ENCODE measurements at regions of chr1 and their contacts with region 1.

Region 1: DNA sequence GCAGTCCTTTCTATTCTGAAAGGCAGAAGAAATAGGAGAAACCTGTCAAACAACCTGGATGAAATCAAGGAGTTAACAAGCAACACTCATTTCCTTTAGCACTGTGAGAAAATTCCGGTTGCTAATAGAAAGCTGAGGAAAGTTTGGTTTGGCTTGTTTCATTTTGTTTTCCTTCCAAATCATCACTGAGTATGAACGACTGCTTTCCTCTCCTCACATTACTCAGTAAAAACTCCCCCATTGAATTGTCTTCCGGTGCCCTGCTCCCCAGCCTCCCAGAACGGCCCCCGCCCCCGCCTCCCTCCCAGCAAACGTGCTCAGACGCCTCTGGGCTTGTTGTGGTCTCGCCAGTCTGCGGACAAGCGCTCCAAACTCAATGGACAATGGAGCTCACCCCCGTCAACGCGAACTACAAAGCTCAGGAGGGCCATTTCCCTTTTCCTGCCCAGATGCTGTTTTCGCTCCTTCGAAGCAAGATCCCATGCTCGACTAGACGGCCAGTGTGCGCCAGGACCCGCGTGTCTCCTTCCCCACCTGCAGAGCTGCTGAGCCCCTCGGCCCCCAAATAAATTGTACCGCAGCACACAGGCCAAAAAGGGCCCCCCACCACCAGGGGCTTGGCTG is 747 bp downstream of the STX6 start:
- DNase-seq: peak; percentile 62 to 72
- ATAC-seq: peak; percentile 53 to 78 (median 68)
- H3K4me3 ChIP-seq: peak overlapping the region; percentile 61 to 100 (median 86)
- H3K27ac ChIP-seq: peak overlapping the region; percentile 56 to 96 (median 90)
- H3K4me1 ChIP-seq: peaks cover 2 to 40% (median 28%) of the 10 kb centered on the region in 9 donors
- H3K27me3 ChIP-seq: no peaks in the 10 kb centered on the region
- CTCF ChIP-seq: no peak

Region 2: DNA sequence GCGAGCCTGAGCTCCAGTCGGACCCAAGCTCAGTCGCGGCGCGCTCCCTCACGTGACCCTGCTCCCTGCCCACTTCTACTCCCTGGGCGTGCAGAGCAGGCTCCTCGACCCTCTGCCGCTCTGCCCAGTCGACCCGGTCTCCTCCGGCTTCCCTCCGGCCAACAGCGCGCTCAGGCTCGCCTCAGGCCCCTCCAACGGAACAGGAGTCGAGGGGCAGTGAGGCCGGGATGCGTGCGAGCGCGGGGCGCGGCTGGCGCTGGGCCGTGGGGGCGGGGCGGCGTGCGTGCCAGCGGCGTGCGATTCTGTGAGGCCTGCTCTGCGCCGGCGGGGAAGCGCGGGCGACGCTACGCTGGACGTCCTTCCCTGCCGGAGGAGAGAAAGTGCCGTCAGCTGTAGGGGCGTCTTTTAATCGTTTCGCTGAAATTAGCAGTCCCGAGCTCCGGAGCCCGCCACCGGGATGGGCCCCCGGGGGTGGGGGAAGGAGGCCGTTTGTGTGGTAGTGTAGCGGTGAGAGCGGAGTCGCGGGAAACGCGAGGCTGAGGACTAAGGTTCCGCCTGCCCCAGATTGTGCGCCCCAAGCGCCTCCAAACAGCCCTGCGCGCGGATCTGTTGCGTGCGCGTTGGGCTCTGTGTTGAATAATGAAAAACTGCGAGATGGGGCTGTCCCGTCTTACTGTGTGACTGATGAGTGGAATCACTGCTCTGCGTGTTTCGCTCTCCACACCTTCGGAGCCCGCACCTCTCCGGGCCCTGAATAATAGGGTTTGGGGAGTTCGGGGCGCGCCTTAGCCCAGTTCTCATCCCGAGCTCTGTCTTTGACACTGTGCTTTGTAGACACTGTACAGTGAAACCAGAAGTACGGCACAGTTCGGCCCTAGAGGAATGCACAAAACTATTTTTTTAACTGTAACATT is 519.3 kb before region 1 on chr1 and contains the start of gene ACBD6:
- intact Hi-C with region 1: loop called in 1 of 10 experiments (anchors 10 kb)
- DNase-seq: peak; percentile 80 to 83
- ATAC-seq: peak; percentile 92 to 96 (median 95)
- H3K4me3 ChIP-seq: peak within 1 kb of the TSS; percentile 63 to 95 (median 88)
- H3K27ac ChIP-seq: peak within 1 kb of the TSS; percentile 67 to 93 (median 90)
- H3K4me1 ChIP-seq: peaks cover 0 to 36% (median 18%) of the 10 kb centered on the region in 9 donors
- H3K27me3 ChIP-seq: no peaks in the 10 kb centered on the region
- CTCF ChIP-seq: peak in 5 of 9 donors; percentile 17 to 31 (median 21)
- total RNA-seq, gene ACBD6: 16.2 to 24.7 (median 20.4) TPM

Region 3: GRCh38 chr1:180515864-180516388 is 506.0 kb before region 1 on chr1:
- intact Hi-C with region 1: loop called in 1 of 10 experiments (anchors 5 kb)
- DNase-seq: peak in 1 of 2 donors; percentile 72
- ATAC-seq: peak; percentile 91 to 97 (median 96)
- H3K4me3 ChIP-seq: no peak overlapping the region
- H3K27ac ChIP-seq: peak overlapping the region in 6 of 10 donors; percentile 16 to 36 (median 30)
- H3K4me1 ChIP-seq: peaks cover 0 to 31% (median 14%) of the 10 kb centered on the region in 9 donors
- H3K27me3 ChIP-seq: no peaks in the 10 kb centered on the region
- CTCF ChIP-seq: peak; percentile 67 to 92 (median 85)

Region 4: DNA sequence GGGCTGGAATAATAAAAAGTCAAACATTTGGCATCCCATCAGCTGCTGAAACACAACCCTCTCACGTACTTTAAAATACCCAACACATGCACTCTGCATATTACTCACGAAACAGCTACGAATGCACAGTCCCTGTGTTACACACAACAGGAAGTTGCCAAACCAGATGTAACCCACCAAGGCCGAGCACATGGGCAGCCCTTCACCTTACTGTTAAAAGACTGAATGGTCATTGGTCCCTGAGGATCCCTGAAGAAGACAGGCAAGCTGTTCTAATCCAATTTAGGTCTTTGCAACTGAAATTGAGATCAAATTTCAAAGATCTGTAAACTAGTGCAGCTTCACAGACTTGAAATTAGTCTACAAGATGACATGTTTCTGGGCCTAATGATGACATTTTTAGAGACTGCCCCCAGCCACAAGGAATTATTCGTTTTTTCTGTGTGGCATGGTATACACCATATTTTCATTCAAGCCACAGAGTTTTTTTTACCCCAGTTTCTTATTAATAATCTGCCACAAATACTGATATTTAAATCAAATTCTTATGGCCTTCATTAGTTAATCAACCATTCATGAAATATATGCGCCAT is 41.0 kb after region 1 on chr1:
- intact Hi-C with region 1: no loop called
- DNase-seq: no peak
- ATAC-seq: peak in 5 of 8 donors; percentile 35 to 67 (median 48)
- H3K4me3 ChIP-seq: peak overlapping the region in 1 of 10 donors; percentile 16
- H3K27ac ChIP-seq: peak overlapping the region in 2 of 10 donors; percentile 40 to 77
- H3K4me1 ChIP-seq: peaks cover 0 to 35% (median 13%) of the 10 kb centered on the region in 9 donors
- H3K27me3 ChIP-seq: no peaks in the 10 kb centered on the region
- CTCF ChIP-seq: no peak

Region 5: DNA sequence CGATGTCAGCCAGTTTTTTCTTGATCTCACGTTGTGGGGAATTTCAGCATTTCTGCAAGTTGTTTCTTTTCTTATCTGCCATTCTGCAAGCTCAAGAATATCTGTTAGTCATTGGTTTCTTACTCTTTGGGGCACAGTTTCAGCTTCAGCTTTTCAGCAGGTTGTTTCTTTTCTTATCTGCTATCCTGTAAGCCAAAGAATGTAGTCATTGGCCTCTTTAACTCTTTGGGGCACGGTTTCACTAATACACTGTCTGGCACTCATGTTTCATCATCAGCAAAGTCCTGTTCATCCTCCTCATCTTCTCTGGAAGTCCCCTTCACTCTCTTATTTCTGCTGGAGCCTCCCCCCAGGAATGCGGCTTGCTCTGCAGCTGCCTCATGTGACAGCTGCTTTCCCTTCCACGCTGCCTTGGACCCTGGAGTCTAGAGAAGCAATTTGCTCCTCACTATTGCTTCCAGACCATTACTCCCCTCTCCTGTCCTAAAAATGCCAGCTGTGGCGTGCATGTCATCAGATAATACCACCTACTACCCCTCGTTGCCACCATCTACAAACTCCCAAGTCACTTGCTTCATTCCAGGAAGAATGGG is 394.4 kb after region 1 on chr1:
- intact Hi-C with region 1: no loop called
- DNase-seq: no peak
- ATAC-seq: no peak
- H3K4me3 ChIP-seq: no peak overlapping the region
- H3K27ac ChIP-seq: no peak overlapping the region
- H3K4me1 ChIP-seq: no peaks in the 10 kb centered on the region
- H3K27me3 ChIP-seq: peaks cover 0 to 12% (median 0%) of the 10 kb centered on the region in 7 donors
- CTCF ChIP-seq: no peak

Measured in heart right ventricle (tissue), 16 donors.